ENCODE measurements at regions of chr2 and their contacts with region 1.

Region 1: DNA sequence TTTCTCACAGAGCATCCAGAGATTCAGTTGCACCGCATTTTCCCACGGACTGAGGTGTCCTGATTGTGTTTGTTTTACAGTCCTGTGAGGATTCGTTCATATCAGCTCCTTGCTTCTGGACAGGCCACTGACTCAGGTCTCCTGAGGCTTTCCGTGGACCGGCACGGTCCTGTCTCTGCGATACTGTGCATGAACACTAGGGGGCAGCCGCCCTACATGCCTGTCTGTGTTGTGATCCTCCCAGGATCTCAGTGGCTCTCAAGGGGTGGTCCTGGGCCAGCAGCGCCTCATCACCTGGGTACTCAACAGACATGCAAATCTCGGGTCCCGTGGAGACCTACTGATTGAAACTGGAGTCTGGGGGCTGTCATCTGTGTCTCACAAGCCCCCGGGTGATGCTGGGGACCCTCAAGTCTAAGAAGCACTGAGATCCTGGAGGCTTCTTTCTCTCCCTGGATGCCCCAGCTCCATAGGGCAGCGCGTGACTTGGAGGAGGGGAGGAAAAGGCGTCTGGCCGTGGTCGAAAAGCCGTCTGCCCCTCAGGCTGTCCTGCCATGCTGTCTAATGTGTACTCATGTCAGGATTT is 28.9 kb downstream of the IL1R2 start:
- DNase-seq: peak; percentile 83
- H3K4me3 ChIP-seq: no peak overlapping the region
- H3K27ac ChIP-seq: no peak overlapping the region
- H3K4me1 ChIP-seq: no peaks in the 10 kb centered on the region
- H3K27me3 ChIP-seq: no peaks in the 10 kb centered on the region
- CTCF ChIP-seq: peak; percentile 95 to 97
- POLR2A ChIP-seq: no peak

Region 2: DNA sequence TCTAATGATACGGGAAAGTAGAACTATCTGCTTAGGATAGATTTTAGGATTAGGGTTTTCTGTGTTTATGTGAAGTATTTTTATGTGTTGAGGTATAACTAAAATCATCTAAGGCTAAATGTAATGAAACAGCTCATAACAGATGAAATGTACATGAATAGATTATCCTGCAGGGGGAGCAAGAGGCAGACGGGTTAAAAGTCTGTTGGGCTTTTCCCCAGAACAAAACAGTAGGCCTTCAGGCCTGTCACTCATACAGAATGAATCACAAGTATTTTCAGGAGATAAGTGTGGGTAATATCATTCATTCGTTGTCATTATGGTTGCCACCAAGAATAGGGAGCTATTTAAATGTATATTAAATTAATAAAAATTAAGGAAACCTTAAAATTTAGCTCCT is 136.8 kb before region 1 on chr2:
- CTCF ChIA-PET with region 1: interaction called, 14 read pairs
- POLR2A ChIA-PET with region 1: no interaction called
- dilution Hi-C with region 1: no loop called
- intact Hi-C with region 1: no loop called
- DNase-seq: peak; percentile 54
- H3K4me3 ChIP-seq: no peak overlapping the region
- H3K27ac ChIP-seq: no peak overlapping the region
- H3K4me1 ChIP-seq: peaks cover 22% of the 10 kb centered on the region
- H3K27me3 ChIP-seq: no peaks in the 10 kb centered on the region
- CTCF ChIP-seq: peak; percentile 33 to 53
- POLR2A ChIP-seq: no peak

Region 3: GRCh38 chr2:102033031-102033749 is 12.5 kb after region 1 on chr2:
- CTCF ChIA-PET with region 1: interaction called, 11 read pairs
- POLR2A ChIA-PET with region 1: no interaction called
- dilution Hi-C with region 1: no loop called
- intact Hi-C with region 1: no loop called
- DNase-seq: peak; percentile 47
- H3K4me3 ChIP-seq: no peak overlapping the region
- H3K27ac ChIP-seq: no peak overlapping the region
- H3K4me1 ChIP-seq: no peaks in the 10 kb centered on the region
- H3K27me3 ChIP-seq: no peaks in the 10 kb centered on the region
- CTCF ChIP-seq: no peak
- POLR2A ChIP-seq: no peak

Region 4: GRCh38 chr2:102137138-102137537 is 116.4 kb after region 1 on chr2:
- CTCF ChIA-PET with region 1: interaction called, 22 read pairs
- POLR2A ChIA-PET with region 1: no interaction called
- dilution Hi-C with region 1: no loop called
- intact Hi-C with region 1: no loop called
- DNase-seq: no peak
- H3K4me3 ChIP-seq: no peak overlapping the region
- H3K27ac ChIP-seq: no peak overlapping the region
- H3K4me1 ChIP-seq: peaks cover 9% of the 10 kb centered on the region
- H3K27me3 ChIP-seq: no peaks in the 10 kb centered on the region
- CTCF ChIP-seq: no peak
- POLR2A ChIP-seq: no peak

Region 5: DNA sequence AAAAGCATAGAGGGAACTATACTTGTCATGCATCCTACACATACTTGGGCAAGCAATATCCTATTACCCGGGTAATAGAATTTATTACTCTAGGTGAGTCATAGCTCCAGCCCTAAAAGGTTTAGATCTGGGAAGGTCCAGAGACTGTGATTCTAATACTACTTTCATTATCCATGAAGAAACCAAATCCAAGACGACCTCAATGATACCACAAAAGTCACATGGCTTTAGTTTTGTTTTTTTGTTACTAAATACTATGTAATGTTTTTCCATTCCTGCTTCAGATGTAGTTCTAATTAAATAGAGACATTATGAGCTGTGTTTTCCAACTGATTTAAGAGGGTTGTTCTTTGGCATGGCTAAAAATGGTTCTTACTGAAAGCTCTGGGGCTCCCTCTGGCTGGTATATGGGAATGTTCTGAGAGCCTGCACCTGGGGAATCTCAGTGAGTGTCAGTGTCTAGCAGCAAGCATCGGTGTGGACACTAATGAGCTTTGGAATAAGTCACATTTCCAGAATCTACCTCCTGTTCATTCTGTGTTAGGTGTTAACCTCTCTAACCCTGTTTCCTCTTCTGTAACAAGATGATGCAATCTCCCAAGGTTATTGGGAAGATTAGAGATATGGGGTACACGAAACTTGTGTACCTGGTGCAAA is 145.6 kb after region 1 on chr2:
- CTCF ChIA-PET with region 1: interaction called, 79 read pairs
- POLR2A ChIA-PET with region 1: no interaction called
- dilution Hi-C with region 1: no loop called
- intact Hi-C with region 1: loop called (anchors 1 kb)
- DNase-seq: peak; percentile 59
- H3K4me3 ChIP-seq: no peak overlapping the region
- H3K27ac ChIP-seq: no peak overlapping the region
- H3K4me1 ChIP-seq: no peaks in the 10 kb centered on the region
- H3K27me3 ChIP-seq: no peaks in the 10 kb centered on the region
- CTCF ChIP-seq: peak in 1 of 2 donors; percentile 46
- POLR2A ChIP-seq: no peak

Region 6: GRCh38 chr2:102235491-102235890 is 214.8 kb after region 1 on chr2:
- CTCF ChIA-PET with region 1: interaction called, 222 read pairs
- POLR2A ChIA-PET with region 1: interaction called, 4 read pairs
- dilution Hi-C with region 1: no loop called
- intact Hi-C with region 1: loop called (anchors 1 kb)
- DNase-seq: peak; percentile 40
- H3K4me3 ChIP-seq: no peak overlapping the region
- H3K27ac ChIP-seq: no peak overlapping the region
- H3K4me1 ChIP-seq: peaks cover 6% of the 10 kb centered on the region
- H3K27me3 ChIP-seq: no peaks in the 10 kb centered on the region
- CTCF ChIP-seq: peak; percentile 36 to 67
- POLR2A ChIP-seq: no peak

Region 7: DNA sequence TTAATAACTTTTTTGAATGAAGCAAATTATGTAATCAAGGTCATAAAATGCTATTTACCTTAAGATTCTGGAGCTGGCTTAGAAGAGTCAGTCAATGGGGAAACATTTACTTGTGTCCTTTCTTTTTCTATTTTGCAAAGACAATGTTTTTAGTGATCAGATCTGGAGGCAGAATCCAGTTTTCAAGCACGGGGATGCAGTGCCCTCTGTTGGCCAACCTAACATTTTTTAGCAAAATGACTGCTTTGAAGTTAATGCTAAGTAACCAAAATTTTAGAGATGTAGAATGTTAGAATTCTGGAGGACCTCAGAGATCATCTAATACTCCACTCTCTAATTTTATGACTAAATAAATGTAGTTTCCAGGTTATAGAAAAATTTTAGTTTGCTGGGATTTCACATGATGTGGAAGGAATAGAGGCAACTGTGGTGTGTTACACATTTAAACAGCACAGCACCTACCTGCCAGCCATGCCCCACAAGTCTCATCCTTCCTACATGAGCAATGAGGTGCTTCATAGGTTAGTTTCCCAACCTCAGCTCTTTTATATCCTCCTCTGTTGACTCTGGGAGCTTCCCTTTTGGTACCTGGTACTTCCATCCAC is 428.8 kb after region 1 on chr2:
- CTCF ChIA-PET with region 1: interaction called, 23 read pairs
- POLR2A ChIA-PET with region 1: no interaction called
- dilution Hi-C with region 1: no loop called
- intact Hi-C with region 1: loop called (anchors 1 kb)
- DNase-seq: peak; percentile 67
- H3K4me3 ChIP-seq: no peak overlapping the region
- H3K27ac ChIP-seq: no peak overlapping the region
- H3K4me1 ChIP-seq: no peaks in the 10 kb centered on the region
- H3K27me3 ChIP-seq: peaks cover 0 to 5% of the 10 kb centered on the region in 2 experiments
- CTCF ChIP-seq: peak; percentile 53 to 58
- POLR2A ChIP-seq: no peak

Measured in endothelial cell of umbilical vein (primary cell).